Heart left ventricle (tissue), 16 donors: ENCODE measurements at regions of chr1 and their contacts with region 1.

Region 1: DNA sequence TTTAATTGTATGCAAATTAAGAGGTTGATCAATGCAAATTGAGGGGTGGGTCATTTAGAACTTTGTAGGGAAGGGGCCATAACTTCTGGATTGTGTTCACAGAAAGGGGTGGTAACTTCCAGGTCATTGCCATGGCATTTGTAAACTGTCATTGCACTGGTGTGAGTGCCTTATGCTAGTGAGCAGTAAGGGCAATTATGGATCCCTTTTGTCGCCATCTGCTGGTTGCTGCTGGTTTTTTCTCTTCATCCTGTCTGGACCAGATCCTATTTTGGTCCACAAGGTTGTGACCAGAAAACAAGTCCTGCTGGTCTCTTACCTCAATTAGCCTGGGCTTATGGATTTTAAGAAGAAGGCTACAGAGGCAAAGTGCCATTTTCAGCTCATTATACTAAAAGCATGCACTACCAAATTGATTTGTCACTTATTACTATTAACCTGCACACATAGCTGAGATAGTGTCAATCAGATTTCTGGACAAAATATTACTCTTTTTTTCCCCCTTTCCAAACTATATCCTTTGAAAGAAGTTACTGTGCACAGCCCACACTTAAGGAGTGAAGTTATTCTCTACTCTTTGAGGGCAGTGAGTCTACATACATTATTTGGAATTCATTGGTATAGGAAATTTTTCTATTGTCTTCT is 196.2 kb downstream of the ZC3H11B start:
- DNase-seq: peak in 3 of 5 donors; percentile 39 to 56 (median 54)
- ATAC-seq: peak in 2 of 4 donors; percentile 62 to 66
- H3K4me3 ChIP-seq: no peak overlapping the region
- H3K27ac ChIP-seq: no peak overlapping the region
- H3K4me1 ChIP-seq: peaks cover 0 to 19% (median 8%) of the 10 kb centered on the region in 12 donors
- H3K27me3 ChIP-seq: no peaks in the 10 kb centered on the region
- CTCF ChIP-seq: peak; percentile 37 to 72 (median 58)
- POLR2A ChIP-seq: no peak

Region 2: DNA sequence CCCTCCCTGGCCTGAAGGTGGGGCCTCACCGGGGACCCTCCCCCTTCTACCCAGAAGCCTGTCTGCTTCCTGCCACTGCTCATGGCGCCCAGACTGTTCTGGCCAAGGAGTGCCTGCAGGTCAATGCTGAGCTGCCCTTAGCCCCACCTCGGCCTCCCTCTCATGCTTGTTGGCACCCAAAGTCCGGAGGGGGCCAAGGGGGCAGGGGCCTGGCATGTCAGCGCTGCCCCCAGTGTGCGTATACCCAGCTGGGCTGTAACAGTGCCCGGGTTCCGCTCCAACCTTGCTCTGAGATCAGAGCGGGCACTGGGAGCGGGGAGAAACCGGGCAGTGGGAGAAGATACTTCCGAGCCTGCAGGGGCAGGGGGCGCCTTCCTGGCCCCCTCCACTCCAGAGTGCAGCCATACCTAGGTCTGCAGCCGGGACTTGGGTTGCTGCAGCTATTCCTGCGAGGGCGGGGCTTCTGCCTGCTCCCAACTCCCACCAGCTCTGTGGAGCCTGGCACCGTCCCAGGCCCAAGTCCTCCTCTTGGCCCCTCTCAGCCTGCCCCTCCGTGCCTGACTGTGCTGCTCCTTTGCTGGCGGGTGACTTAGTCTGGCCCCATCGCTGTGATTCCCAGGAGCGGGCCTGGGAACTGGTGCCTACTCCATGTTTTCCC is 1093.0 kb before region 1 on chr1:
- intact Hi-C with region 1: loop called in 1 of 10 experiments (anchors 10 kb)
- DNase-seq: peak in 1 of 5 donors; percentile 59
- ATAC-seq: peak in 2 of 4 donors; percentile 11 to 49
- H3K4me3 ChIP-seq: no peak overlapping the region
- H3K27ac ChIP-seq: no peak overlapping the region
- H3K4me1 ChIP-seq: no peaks in the 10 kb centered on the region
- H3K27me3 ChIP-seq: no peaks in the 10 kb centered on the region
- CTCF ChIP-seq: no peak
- POLR2A ChIP-seq: no peak

Region 3: GRCh38 chr1:219209578-219209977 is 207.1 kb before region 1 on chr1:
- intact Hi-C with region 1: loop called in 1 of 10 experiments (anchors 10 kb)
- DNase-seq: no peak
- ATAC-seq: peak in 3 of 4 donors; percentile 68 to 81 (median 80)
- H3K4me3 ChIP-seq: no peak overlapping the region
- H3K27ac ChIP-seq: peak overlapping the region in 1 of 12 donors; percentile 25
- H3K4me1 ChIP-seq: peaks cover 0 to under 1% (median 0%) of the 10 kb centered on the region in 12 donors
- H3K27me3 ChIP-seq: no peaks in the 10 kb centered on the region
- CTCF ChIP-seq: no peak
- POLR2A ChIP-seq: no peak

Region 4: DNA sequence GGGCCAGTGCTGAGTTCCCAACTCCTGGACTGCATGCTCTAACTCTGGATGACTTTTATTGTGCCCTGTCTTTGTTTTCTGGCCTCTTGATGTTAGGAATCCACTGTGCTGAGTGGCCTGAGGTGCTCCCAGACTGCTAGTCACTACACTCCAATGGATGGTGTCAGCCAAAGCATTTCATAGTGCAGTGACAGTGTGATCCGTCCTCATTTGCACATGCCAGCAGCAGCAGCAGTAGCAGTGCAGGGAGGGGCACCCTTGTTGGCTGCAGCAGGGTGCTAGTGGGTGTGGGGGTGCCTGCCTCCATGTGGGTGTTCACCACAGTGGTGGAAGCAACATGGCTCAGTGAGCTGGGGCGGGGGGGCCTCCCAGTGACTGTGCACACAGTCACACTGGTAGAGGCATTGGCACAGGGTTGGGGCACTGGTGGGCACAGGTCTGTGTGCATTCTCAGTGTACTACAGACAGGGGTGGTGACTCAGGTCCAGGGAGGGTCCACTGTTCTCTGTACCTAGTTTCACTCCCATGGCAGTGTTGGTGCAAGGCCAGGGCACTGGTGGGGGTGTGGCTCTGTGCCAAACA is 17.8 kb before region 1 on chr1:
- intact Hi-C with region 1: no loop called
- DNase-seq: peak in 4 of 5 donors; percentile 34 to 67 (median 47)
- ATAC-seq: peak; percentile 97
- H3K4me3 ChIP-seq: no peak overlapping the region
- H3K27ac ChIP-seq: peak overlapping the region in 8 of 12 donors; percentile 1 to 63 (median 38)
- H3K4me1 ChIP-seq: peaks cover 0 to 17% (median 0%) of the 10 kb centered on the region in 12 donors
- H3K27me3 ChIP-seq: no peaks in the 10 kb centered on the region
- CTCF ChIP-seq: no peak
- POLR2A ChIP-seq: no peak